Cardiac septum (tissue), 1 donor: ENCODE measurements at regions of chr1 and their contacts with region 1.

Region 1: GRCh38 chr1:204411451-204412204 is at the start of gene PPP1R15B:
- DNase-seq: peak; percentile 99
- total RNA-seq, gene PPP1R15B: 21.2 TPM

Region 2: GRCh38 chr1:203267347-203267846 is 1144.2 kb before region 1 on chr1:
- intact Hi-C with region 1: loop called (anchors 5 kb)
- DNase-seq: peak; percentile 89

Region 3: DNA sequence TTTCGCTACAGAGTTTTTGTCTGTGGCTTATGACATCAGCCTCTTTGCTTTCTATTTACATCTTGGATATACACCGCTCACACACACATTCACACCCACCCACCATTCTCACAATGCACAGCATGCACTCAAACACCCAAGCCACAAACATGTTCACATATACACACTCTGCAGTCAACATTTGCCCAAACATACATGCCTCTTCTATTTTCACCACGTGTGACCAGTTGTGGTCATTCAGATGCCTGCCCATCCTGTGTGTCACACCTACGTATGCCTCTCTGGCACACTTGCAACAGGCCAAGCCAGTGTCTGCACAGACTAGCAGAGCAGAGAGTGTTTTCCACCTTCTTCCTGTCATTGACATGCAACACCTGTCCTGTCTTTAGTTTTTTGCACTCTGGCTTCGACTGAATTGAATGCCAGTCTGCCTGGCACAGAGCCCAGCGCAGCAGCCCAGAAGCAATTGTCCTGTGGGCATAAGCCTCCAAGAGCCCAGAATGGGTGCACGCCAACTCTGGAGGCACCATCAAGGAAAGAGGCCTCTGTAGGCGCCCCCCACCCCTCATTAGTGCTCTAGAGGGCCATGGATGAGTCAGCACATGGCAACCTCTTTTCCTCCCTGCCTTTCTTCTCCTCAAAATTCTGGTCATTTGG is 311.6 kb after region 1 on chr1:
- intact Hi-C with region 1: no loop called
- DNase-seq: no peak